A673 (cell line): ENCODE measurements at regions of chr1 and their contacts with region 1.

Region 1: GRCh38 chr1:151165738-151166505 is at the starts of genes LYSMD1 and SCNM1:
- DNase-seq: peak; percentile 100
- H3K4me3 ChIP-seq: peak within 1 kb of the TSS; percentile 73
- H3K27ac ChIP-seq: peak within 1 kb of the TSS; percentile 81
- H3K4me1 ChIP-seq: peaks cover 13% of the 10 kb centered on the region
- H3K27me3 ChIP-seq: no peaks in the 10 kb centered on the region
- CTCF ChIP-seq: no peak
- total RNA-seq, gene LYSMD1: 7.7 and 8.1 TPM in 2 replicates
- total RNA-seq, gene SCNM1: 57.5 and 59.6 TPM in 2 replicates

Region 2: GRCh38 chr1:150863724-150864123 is 302.2 kb before region 1 on chr1:
- CTCF ChIA-PET with region 1: no interaction called
- POLR2A ChIA-PET with region 1: interaction called, 12 read pairs
- intact Hi-C with region 1: no loop called
- DNase-seq: no peak
- H3K4me3 ChIP-seq: no peak overlapping the region
- H3K27ac ChIP-seq: no peak overlapping the region
- H3K4me1 ChIP-seq: no peaks in the 10 kb centered on the region
- H3K27me3 ChIP-seq: no peaks in the 10 kb centered on the region
- CTCF ChIP-seq: no peak

Region 3: GRCh38 chr1:151124763-151125403 is 41.0 kb before region 1 on chr1:
- CTCF ChIA-PET with region 1: no interaction called
- POLR2A ChIA-PET with region 1: no interaction called
- intact Hi-C with region 1: no loop called
- DNase-seq: no peak
- H3K4me3 ChIP-seq: no peak overlapping the region
- H3K27ac ChIP-seq: no peak overlapping the region
- H3K4me1 ChIP-seq: no peaks in the 10 kb centered on the region
- H3K27me3 ChIP-seq: no peaks in the 10 kb centered on the region
- CTCF ChIP-seq: no peak